ENCODE measurements at regions of chr3 and their contacts with region 1.

Region 1: DNA sequence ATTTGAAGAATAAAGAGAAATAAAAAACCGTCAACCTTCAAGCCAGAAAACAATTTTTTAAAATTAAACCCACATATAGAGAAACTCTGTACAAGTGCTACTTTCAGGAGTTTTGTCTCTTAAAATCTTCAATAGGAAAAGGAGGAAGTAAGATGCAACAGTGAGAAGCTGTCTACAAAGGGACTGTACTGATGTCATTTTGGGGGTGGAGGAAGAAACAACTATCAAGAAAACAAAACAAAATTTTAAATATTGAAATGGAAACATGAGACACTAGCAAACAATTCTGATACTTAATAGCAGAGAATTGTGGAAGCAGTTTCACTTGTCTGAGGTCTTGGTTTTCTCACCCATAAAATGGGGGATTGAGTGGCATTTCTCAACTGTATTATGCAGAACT is 84.4 kb downstream of the SLMAP start:
- DNase-seq: no peak
- H3K4me3 ChIP-seq: no peak overlapping the region
- CTCF ChIP-seq: no peak
- POLR2A ChIP-seq: no peak

Region 2: GRCh38 chr3:57409456-57409855 is 431.0 kb before region 1 on chr3:
- intact Hi-C with region 1: loop called (anchors 10 kb)
- DNase-seq: no peak
- H3K4me3 ChIP-seq: no peak overlapping the region
- CTCF ChIP-seq: no peak
- POLR2A ChIP-seq: no peak

Region 3: GRCh38 chr3:57729334-57730045 is 111.0 kb before region 1 on chr3:
- intact Hi-C with region 1: no loop called
- DNase-seq: no peak
- H3K4me3 ChIP-seq: no peak overlapping the region
- CTCF ChIP-seq: no peak
- POLR2A ChIP-seq: no peak

Measured in lower leg skin (tissue), 4 donors.